Gastrocnemius medialis (tissue), 4 donors: ENCODE measurements at regions of chr7 and their contacts with region 1.

Region 1: GRCh38 chr7:101602484-101603241 is 26.4 kb downstream of the MYL10 start:
- DNase-seq: peak; percentile 24 to 53
- ATAC-seq: peak; percentile 87 to 91
- H3K4me3 ChIP-seq: no peak overlapping the region
- H3K27ac ChIP-seq: no peak overlapping the region
- H3K4me1 ChIP-seq: peaks cover 0 to 4% of the 10 kb centered on the region in 2 donors
- H3K27me3 ChIP-seq: no peaks in the 10 kb centered on the region
- CTCF ChIP-seq: peak; percentile 65 to 92 (median 84)
- POLR2A ChIP-seq: no peak

Region 2: DNA sequence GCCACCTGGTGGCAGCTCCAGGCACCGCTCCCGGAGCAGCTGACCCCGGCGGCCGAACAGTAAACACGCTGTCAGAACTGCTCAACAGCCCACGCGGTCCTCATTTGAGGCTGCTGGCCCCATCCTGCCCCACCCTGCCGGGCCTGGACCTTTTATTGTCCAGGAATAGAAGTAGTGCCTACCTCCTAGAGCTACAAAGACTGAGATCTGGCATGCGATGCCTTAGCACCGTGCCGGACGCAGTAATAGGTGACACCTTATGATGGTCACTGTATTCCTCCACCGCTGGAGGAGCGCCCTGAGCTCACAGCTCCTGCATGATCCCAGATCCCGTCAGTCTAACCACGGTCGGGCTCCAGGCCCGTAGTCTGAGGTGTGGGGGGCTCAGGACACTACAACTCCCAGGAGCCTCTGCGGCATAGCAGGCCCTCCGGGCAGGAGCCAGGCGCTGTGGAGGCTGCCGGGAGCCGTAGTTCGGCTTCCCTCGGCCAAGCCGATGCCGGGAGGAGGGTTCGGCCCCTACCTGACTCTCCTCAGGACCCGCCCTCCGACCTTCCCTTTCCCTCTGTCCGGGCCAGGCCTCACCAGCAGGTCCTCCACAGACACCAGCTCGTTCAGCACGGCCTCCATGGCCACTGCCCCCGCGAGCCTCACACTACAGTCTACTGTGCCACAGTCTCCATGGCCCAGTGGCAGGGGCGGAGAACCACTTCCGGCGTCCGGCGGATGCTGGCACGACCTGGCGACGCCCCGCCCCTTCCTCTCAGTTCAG is 358.1 kb before region 1 on chr7 and contains the start of gene FIS1:
- in situ Hi-C with region 1: no loop called
- intact Hi-C with region 1: no loop called
- DNase-seq: peak; percentile 89 to 91
- ATAC-seq: peak; percentile 95 to 96
- H3K4me3 ChIP-seq: peak within 1 kb of the TSS; percentile 78 to 83 (median 80)
- H3K27ac ChIP-seq: peak within 1 kb of the TSS; percentile 95 to 100 (median 97)
- H3K4me1 ChIP-seq: peaks cover 42 to 43% of the 10 kb centered on the region in 2 donors
- H3K27me3 ChIP-seq: no peaks in the 10 kb centered on the region
- CTCF ChIP-seq: peak; percentile 45 to 98 (median 95)
- POLR2A ChIP-seq: peak; percentile 86 to 87
- total RNA-seq, gene FIS1: 319 to 467 (median 364) TPM

Region 3: DNA sequence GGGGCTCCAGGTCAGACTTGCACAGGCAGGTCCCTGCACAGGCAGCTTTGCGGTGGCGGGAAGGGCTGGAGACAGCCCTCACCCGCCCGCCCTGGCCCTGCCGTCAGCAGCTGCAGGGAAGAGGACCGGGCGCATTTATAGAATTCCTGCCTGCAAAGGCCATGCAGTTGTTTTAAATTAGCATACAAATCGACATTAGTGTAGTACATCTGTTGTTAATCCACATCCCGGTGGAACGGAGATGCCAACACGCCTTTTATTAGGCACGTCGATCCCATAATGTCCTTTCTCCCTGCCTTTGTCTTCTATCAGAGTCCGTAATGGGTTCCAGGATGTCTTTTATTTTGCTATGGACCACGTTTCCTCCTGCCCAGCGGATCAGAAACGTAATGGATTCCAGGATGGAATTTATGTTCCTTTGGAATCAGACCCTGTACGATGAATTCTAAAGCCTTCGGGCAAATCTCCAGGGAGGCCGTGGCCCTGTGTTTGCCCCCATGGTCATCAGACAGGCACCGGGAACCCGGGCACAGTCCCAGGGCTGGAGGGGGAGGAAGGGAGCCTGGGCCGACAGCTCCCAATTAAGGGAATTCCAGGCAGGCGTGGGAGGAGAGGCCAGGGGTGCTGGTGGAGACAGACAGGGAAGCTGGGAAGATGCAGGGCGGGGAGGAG is 116.1 kb before region 1 on chr7:
- in situ Hi-C with region 1: no loop called
- intact Hi-C with region 1: no loop called
- DNase-seq: no peak
- ATAC-seq: no peak
- H3K4me3 ChIP-seq: no peak overlapping the region
- H3K27ac ChIP-seq: no peak overlapping the region
- H3K4me1 ChIP-seq: no peaks in the 10 kb centered on the region
- H3K27me3 ChIP-seq: peaks cover 5 to 22% (median 22%) of the 10 kb centered on the region in 3 donors
- CTCF ChIP-seq: no peak
- POLR2A ChIP-seq: no peak

Region 4: GRCh38 chr7:102272075-102272917 is 669.6 kb after region 1 on chr7:
- in situ Hi-C with region 1: no loop called
- intact Hi-C with region 1: loop called (anchors 1 kb)
- DNase-seq: peak; percentile 52 to 71
- ATAC-seq: peak; percentile 81 to 91
- H3K4me3 ChIP-seq: no peak overlapping the region
- H3K27ac ChIP-seq: no peak overlapping the region
- H3K4me1 ChIP-seq: no peaks in the 10 kb centered on the region
- H3K27me3 ChIP-seq: no peaks in the 10 kb centered on the region
- CTCF ChIP-seq: peak; percentile 86 to 95 (median 93)
- POLR2A ChIP-seq: no peak